Posterior vena cava (tissue), 2 donors: ENCODE measurements at regions of chr13 and their contacts with region 1.

Region 1: GRCh38 chr13:98133946-98134345 is 8.9 kb upstream of the FARP1 start:
- DNase-seq: no peak

Region 2: DNA sequence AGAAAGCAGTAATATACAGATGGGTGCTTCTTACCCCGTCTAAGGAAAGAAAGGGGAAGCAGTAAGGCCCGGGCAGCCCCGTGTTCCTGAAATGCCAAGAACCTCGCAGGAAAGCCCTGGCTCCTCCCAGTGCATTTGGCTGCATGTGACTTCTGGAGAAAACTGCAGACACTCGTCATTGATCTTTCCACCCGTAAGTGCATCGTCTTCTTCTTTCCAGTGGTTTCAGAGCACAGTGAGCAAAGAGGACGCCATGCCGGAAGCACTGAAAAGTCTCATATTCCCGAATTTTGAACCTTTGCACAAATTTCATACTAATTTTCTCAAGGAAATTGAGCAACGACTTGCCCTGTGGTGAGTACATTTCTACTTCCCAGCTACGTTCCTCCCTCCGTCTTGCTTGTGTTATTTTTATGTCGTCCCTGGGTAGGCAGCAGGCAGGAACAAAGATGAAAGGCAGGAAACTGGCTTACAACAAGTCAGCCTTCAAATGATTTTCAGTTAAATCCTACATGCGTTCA is 277.8 kb after region 1 on chr13:
- intact Hi-C with region 1: loop called in 1 of 2 experiments (anchors 10 kb)
- DNase-seq: no peak